Cardiac septum (tissue), 1 donor: ENCODE measurements at regions of chr20 and their contacts with region 1.

Region 1: DNA sequence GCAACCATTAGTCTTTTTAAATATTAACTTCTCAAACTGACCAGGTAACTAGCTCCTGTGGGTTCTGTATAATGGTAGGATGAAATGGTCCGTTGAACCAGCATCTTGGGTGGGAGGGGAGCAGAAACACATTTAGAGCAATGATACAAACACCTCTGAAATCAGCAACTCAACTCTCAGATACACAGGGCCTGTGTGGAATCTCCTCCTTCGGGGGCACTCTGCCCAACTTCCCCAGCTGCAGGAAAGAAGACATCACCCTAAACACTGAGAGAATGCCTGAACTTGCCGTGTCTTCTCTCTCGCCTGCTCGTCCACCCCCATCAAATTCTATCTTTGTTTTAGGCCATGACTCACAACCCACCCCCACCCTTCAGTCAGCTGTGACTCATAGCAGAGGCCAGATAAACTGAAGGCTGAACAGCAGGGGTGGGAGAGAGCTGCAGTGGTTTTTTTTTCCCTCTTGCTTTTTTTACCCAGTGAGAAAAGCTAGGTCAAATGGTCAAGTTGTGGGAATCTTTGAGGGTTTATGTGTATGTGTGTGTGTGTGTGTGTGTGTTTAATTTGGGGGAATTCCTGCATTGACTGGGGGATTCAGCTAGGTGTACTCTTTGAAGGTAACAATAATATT is 593.4 kb upstream of the JAG1 start:
- DNase-seq: peak; percentile 76

Region 2: DNA sequence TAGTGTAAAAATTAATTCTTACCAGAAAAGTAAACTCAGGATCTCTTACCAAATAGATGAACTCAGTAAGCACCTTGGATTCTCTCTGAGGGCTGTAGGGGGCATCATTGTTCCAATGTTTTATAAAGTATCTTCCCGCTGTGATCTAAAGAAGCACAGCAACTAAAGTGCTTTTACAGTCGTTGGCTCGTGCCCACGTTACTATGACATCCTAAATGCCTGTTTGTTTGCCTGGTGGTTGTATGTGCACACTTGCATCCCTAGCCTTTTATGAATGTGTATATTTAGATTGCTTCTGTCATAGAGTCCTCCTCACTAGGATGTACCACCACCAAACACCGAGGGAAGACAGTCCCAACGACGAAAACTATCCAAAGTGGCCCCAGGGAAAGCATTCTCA is 797.6 kb before region 1 on chr20:
- intact Hi-C with region 1: loop called (anchors 5 kb)
- DNase-seq: no peak

Region 3: DNA sequence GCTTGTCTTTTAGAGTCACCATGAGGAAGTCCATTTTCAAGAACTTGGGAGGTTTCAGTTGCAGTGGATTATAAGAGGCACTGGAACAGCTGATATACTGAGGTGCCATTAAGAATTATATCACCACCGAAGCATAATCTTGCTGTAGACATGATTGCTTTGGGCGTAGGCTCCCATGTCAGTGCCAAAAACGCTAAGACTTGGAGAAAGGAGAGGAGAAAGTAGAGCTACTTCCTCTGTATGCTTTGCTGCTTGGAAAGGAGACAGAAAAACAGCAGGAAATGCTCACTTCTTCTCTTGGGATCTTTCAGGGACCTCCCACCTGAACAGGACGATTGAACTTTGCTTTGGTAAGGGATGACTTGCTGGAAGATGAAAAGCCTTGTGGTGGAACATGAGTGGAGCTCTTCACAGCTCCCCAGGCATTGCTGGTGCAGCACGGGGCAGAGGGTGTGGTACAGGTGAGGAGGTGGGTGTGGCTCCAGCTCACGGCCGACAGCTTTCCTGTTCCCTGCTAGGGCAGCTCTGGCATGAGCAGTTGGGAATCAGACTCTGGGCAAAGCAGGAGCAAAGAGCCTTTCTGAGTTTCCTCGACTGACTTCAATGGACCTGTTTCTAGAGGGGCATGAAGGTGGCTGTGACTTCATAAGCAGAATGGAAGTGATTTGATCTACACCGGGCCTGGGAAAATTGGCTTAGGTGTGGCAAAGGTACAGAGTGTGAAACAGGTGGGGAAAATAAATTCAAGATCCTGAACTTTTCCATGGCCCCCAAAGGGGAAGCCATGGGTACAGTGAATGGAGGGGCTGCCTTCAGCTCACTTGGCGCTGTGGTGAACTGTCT is 402.9 kb before region 1 on chr20:
- intact Hi-C with region 1: loop called (anchors 10 kb)
- DNase-seq: no peak

Region 4: GRCh38 chr20:11204926-11205768 is 62.1 kb before region 1 on chr20:
- intact Hi-C with region 1: loop called (anchors 5 kb)
- DNase-seq: no peak